Mammary epithelial cell (primary cell): ENCODE measurements at regions of chr1 and their contacts with region 1.

Region 1: GRCh38 chr1:235415008-235415904 is 48.0 kb downstream of the TBCE start:
- DNase-seq: peak; percentile 67
- H3K4me3 ChIP-seq: no peak overlapping the region
- H3K27ac ChIP-seq: no peak overlapping the region
- H3K4me1 ChIP-seq: peaks cover 4% of the 10 kb centered on the region
- H3K27me3 ChIP-seq: no peaks in the 10 kb centered on the region
- CTCF ChIP-seq: peak; percentile 66 to 83

Region 2: DNA sequence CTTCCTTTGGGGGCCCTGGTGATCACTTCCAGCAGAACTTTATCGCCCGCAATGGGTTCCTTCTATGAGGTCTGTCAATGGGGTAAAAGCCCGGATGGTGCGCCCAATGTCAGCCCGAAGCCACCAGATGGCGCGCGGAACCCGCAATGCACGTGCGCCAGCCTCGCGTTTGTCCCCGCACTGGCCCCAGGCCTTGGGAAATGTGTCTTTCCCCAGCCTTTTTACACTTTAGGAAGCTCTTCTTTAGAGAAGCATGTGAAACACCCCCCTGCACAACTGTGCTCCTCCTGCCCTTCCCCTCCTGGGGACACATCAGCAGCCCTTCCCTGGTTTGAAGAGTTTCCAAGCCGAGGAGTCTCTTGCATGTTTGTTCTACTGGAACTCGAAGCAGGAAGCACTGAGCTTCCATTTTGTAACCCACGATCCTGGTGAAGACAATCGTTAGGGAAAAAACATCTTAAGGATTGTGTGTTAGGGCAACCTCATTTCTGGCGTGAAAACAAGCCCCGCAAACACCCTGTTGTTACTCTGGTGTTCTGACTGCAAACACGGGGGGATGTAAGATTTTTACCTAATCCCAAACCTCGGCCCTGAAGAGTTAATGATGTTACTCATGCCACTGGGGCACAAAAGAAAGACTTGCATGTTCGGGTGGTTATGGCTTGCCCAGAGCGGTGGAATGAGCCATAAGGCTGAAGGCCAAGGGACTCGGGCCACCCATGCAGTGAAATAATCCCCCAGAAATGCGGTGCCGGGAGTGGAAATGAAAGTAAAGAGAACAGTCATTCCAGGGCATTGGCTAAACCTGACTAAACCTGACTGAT is 915.9 kb before region 1 on chr1:
- CTCF ChIA-PET with region 1: no interaction called
- dilution Hi-C with region 1: no loop called
- in situ Hi-C with region 1: loop called in 1 of 2 experiments (anchors 25 kb)
- intact Hi-C with region 1: loop called (anchors 2 kb)
- DNase-seq: peak; percentile 84
- H3K4me3 ChIP-seq: peak overlapping the region in 2 of 3 experiments; percentile 10 to 13
- H3K27ac ChIP-seq: peak overlapping the region; percentile 90
- H3K4me1 ChIP-seq: peaks cover 38% of the 10 kb centered on the region
- H3K27me3 ChIP-seq: no peaks in the 10 kb centered on the region
- CTCF ChIP-seq: peak; percentile 89 to 97

Region 3: DNA sequence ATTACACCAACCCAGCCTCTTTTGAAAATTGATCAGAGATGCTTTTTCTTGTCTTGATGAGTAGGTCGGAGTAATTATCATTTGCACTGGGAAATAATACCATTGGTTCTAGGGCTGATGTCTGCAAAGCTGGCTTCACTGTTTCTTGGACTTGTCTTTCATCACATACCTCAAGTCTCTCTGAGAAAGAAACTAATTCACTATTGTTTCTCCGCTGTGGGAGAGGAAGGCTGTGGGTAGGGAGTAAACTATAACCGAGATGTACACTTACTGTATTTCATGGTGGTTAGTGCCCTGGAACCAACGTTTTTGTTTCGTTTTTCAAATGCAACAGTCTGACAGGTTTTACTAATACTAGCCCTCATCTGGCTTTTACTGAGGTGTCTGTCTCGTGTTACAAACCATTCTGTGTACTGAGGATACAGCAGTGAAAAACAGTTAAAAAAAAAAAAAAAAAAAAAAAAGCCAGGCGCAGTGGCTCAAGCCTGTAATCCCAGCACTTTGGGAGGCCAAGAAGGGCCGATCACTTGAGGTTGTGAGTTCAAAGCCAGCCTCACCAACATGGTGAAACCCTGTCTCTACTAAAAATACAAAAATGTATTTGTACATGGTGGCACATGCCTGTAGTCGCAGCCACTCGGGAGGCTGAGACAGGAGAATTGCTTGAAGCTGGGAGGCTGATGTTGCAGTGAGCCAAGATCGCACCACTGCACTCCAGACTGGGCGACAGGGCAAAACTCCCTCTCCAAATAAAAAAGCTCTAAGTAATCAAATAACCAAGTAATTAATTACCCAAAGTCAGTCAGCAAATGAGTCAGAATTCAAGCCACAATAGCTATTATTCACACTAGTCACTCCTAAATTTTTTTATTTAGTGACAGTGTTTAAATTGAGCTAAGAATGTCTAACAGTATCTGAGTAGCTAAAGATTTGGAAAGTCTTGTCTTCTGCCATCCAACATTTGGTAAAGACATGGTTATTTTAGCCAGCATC is 309.9 kb before region 1 on chr1:
- CTCF ChIA-PET with region 1: interaction called, 5 read pairs
- dilution Hi-C with region 1: no loop called
- in situ Hi-C with region 1: loop called in 1 of 2 experiments (anchors 25 kb)
- intact Hi-C with region 1: loop called (anchors 1 kb)
- DNase-seq: no peak
- H3K4me3 ChIP-seq: peak overlapping the region in 1 of 3 experiments; percentile 25
- H3K27ac ChIP-seq: no peak overlapping the region
- H3K4me1 ChIP-seq: peaks cover 17% of the 10 kb centered on the region
- H3K27me3 ChIP-seq: no peaks in the 10 kb centered on the region
- CTCF ChIP-seq: no peak

Region 4: GRCh38 chr1:235199441-235199840 is 215.8 kb before region 1 on chr1:
- CTCF ChIA-PET with region 1: no interaction called
- dilution Hi-C with region 1: no loop called
- in situ Hi-C with region 1: no loop called
- intact Hi-C with region 1: loop called (anchors 5 kb)
- DNase-seq: peak; percentile 13
- H3K4me3 ChIP-seq: no peak overlapping the region
- H3K27ac ChIP-seq: no peak overlapping the region
- H3K4me1 ChIP-seq: no peaks in the 10 kb centered on the region
- H3K27me3 ChIP-seq: no peaks in the 10 kb centered on the region
- CTCF ChIP-seq: peak; percentile 20 to 30

Region 5: GRCh38 chr1:235253219-235253962 is 161.9 kb before region 1 on chr1:
- CTCF ChIA-PET with region 1: interaction called, 28 read pairs
- dilution Hi-C with region 1: no loop called
- in situ Hi-C with region 1: loop called (anchors 5 kb)
- intact Hi-C with region 1: loop called (anchors 1 kb)
- DNase-seq: peak; percentile 63
- H3K4me3 ChIP-seq: no peak overlapping the region
- H3K27ac ChIP-seq: no peak overlapping the region
- H3K4me1 ChIP-seq: no peaks in the 10 kb centered on the region
- H3K27me3 ChIP-seq: no peaks in the 10 kb centered on the region
- CTCF ChIP-seq: peak; percentile 73 to 93

Region 6: GRCh38 chr1:235328357-235329138 is 86.7 kb before region 1 on chr1 and contains the start of gene GGPS1:
- CTCF ChIA-PET with region 1: interaction called, 8 read pairs
- dilution Hi-C with region 1: no loop called
- in situ Hi-C with region 1: loop called in 1 of 2 experiments (anchors 5 kb)
- intact Hi-C with region 1: loop called (anchors 1 kb)
- DNase-seq: peak; percentile 96
- H3K4me3 ChIP-seq: peak within 1 kb of the TSS; percentile 77 to 96 (median 95)
- H3K27ac ChIP-seq: peak within 1 kb of the TSS; percentile 90
- H3K4me1 ChIP-seq: peaks cover 24% of the 10 kb centered on the region
- H3K27me3 ChIP-seq: no peaks in the 10 kb centered on the region
- CTCF ChIP-seq: peak in 1 of 2 donors; percentile 7
- total RNA-seq, gene GGPS1: 35.8 to 37.9 TPM

Region 7: GRCh38 chr1:235339746-235340445 is 75.4 kb before region 1 on chr1:
- CTCF ChIA-PET with region 1: no interaction called
- dilution Hi-C with region 1: no loop called
- in situ Hi-C with region 1: no loop called
- intact Hi-C with region 1: no loop called
- DNase-seq: no peak
- H3K4me3 ChIP-seq: no peak overlapping the region
- H3K27ac ChIP-seq: no peak overlapping the region
- H3K4me1 ChIP-seq: no peaks in the 10 kb centered on the region
- H3K27me3 ChIP-seq: no peaks in the 10 kb centered on the region
- CTCF ChIP-seq: no peak

Region 8: GRCh38 chr1:235430991-235431390 is 15.7 kb after region 1 on chr1:
- CTCF ChIA-PET with region 1: no interaction called
- dilution Hi-C with region 1: no loop called
- in situ Hi-C with region 1: no loop called
- intact Hi-C with region 1: no loop called
- DNase-seq: no peak
- H3K4me3 ChIP-seq: no peak overlapping the region
- H3K27ac ChIP-seq: no peak overlapping the region
- H3K4me1 ChIP-seq: no peaks in the 10 kb centered on the region
- H3K27me3 ChIP-seq: no peaks in the 10 kb centered on the region
- CTCF ChIP-seq: no peak